ENCODE measurements at regions of chr1 and their contacts with region 1.

Region 1: GRCh38 chr1:62746085-62746808 is 37.7 kb upstream of the ATG4C start:
- DNase-seq: peak; percentile 47
- CTCF ChIP-seq: peak; percentile 45

Region 2: DNA sequence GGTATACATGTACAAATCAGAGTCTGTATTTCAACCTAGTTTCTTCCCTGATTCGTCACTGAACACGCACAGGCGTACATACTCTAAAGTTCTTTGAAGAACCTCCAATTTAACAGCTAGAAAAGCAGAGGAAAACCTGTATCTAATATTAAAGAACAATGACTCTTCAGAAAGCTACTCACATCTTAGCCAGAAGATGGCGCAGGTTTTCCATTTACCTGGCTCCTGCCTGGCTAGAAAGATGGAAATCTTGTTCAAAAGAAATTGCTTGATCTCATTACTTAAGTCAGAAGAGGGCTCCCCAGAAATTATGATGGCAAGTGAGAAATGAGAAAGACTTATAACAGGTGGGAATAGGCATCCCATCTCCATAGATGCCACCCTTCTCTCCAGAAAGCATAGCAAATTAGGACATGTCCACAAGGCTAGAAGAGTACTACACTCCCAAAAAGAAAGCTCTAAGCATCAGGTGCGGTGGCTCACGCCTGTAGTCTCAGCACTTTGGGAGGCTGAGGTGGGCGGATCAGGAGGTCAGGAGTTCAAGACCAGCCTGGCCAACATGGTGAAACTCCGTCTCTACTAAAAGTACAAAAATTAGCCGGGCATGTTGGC is 570.6 kb before region 1 on chr1:
- CTCF ChIA-PET with region 1: interaction called, 39 read pairs
- POLR2A ChIA-PET with region 1: no interaction called
- DNase-seq: peak; percentile 55
- CTCF ChIP-seq: peak; percentile 80

Region 3: DNA sequence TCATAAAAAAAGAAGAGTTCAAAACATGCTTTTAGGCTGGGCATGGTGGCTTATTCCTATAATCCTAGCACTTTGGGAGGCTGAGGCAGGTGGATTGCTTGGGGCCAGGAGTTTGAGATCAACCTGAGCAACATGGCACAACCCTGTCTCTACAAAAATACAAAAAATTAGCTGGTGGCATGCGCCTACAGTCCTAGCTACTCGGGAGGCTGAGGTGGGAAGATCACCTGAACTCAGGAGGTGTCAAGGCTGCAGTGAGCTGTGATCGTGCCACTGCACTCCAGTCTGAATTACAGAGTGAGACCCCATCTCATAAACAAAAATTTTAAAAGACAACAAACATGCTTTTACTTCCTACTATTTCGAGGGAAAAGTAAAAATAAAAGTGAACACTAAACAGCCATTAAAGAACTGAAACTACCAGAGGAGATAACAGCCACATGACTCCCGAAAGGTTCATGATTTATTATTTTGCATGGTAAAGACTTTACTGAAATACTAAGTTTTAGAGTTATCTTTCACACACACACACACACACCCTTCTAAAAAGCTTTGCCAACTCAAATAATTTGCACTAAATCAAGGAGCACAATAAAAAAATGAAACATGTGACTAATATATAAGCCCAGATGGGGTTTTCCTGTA is 261.3 kb before region 1 on chr1:
- CTCF ChIA-PET with region 1: interaction called, 13 read pairs
- POLR2A ChIA-PET with region 1: no interaction called
- DNase-seq: peak; percentile 19
- CTCF ChIP-seq: no peak

Region 4: GRCh38 chr1:62508187-62508758 is 238.0 kb before region 1 on chr1:
- CTCF ChIA-PET with region 1: interaction called, 107 read pairs
- POLR2A ChIA-PET with region 1: no interaction called
- DNase-seq: peak; percentile 34
- CTCF ChIP-seq: peak; percentile 77

Region 5: GRCh38 chr1:62725255-62725654 is 21.0 kb before region 1 on chr1:
- CTCF ChIA-PET with region 1: interaction called, 18 read pairs
- POLR2A ChIA-PET with region 1: no interaction called
- DNase-seq: no peak
- CTCF ChIP-seq: no peak

Region 6: DNA sequence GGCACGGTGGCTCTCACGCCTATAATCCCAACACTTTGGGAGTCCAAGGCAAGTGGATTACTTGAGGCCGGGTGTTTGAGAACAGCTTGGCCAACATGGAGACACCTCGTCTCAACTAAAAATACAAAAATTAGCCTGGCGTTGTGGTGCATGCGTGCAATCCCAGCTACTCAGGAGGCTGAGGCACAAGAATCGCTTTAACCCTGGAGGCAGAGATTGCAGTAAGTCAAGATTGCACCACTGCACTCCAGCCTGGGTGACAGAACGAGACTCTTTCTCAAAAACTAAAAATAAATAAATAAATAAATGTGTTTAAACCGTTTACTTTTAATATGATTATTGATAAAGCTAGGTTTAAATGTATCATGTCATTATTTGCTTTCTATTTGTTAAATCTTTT is 68.5 kb after region 1 on chr1:
- CTCF ChIA-PET with region 1: no interaction called
- POLR2A ChIA-PET with region 1: no interaction called
- DNase-seq: no peak
- CTCF ChIP-seq: no peak

Measured in GM10248 (cell line).